Activated CD4-positive, alpha-beta memory T cell treated with anti-CD3 and anti-CD28 coated beads for 36 hours (primary cell): ENCODE measurements at regions of chr12 and their contacts with region 1.

Region 1: DNA sequence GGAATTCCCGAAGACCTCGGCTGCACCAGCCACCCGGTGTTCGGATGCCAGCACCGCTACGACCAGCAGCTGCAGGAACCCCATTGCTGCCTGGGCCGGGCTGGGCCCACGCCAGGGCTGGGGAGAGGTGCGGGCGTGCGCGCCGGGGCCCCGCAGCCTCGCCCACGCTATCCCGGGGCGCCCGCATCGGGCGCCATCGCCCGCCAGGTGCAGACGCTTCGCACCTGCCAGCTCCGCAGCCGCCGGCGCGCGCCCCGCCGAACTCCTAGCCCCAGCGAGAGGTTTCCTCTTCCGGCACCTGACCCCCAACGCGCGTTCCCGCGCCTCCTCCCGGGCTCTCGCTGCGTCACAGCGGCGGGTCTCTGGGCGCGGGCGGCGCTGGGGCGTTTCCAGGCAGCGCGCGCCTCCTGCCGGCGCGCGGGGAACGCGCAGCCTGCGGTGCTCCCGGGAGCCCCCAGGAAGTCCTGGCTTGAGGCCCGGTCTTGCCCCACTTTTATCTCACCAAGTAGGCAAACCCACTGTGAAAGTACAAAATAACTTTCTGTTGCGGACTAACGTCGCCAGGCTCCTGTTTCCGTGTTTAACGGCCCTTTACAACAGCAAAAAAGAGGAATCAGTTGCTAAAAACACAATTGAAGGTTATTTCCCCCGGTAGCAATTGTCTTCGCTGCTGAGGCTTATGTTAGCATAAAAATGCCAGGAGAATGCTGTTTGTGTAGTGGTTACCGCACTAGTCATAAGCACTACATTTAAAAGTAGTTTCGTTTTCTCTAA is at the start of gene TM7SF3:
- DNase-seq: peak; percentile 96
- H3K4me3 Mint-ChIP-seq: peak within 1 kb of the TSS; percentile 85
- H3K27ac Mint-ChIP-seq: peak within 1 kb of the TSS; percentile 89
- H3K4me1 Mint-ChIP-seq: peaks cover 46% of the 10 kb centered on the region
- H3K27me3 Mint-ChIP-seq: no peaks in the 10 kb centered on the region
- total RNA-seq, gene TM7SF3: 24.2 to 28.5 TPM

Region 2: DNA sequence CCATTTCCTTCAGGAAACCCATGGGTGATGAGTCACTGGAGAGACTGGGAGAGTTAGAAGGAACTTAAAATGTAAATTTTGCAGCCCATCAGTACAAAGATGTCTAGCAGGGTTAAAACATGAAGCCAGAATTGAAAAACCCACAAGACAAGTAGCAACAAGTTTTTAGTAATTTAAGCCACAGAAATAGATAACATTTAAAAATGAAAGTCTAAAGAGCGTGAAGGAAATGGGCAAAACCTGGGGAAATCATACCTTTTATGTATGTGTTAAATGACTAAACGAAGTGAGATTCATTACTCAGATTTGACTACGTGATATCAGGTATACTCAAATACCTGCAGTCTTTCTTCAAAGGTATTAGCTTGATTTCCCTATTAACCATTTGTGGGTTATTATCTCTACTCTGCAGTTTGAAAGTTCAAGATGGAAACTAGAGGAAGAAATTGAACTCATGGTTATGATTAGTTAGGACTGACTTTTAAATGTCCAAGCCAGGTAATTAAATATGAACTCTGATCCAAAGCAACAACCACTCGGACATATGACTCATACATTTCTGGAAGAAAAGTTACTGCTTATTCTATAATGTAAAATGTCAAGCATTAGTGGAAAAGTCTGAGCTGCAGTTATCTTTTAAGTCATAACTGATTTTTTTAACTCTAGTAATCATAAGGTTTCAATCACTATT is 265.4 kb before region 1 on chr12:
- CTCF ChIA-PET with region 1: interaction called, 4 read pairs
- POLR2A ChIA-PET with region 1: no interaction called
- intact Hi-C with region 1: loop called (anchors 1 kb)
- DNase-seq: no peak
- H3K4me3 Mint-ChIP-seq: peak overlapping the region; percentile 16
- H3K27ac Mint-ChIP-seq: peak overlapping the region; percentile 69
- H3K4me1 Mint-ChIP-seq: peaks cover 55% of the 10 kb centered on the region
- H3K27me3 Mint-ChIP-seq: no peaks in the 10 kb centered on the region

Region 3: GRCh38 chr12:26884765-26885576 is 129.3 kb before region 1 on chr12:
- CTCF ChIA-PET with region 1: interaction called, 16 read pairs
- POLR2A ChIA-PET with region 1: interaction called, 3 read pairs
- intact Hi-C with region 1: loop called (anchors 1 kb)
- DNase-seq: peak; percentile 87
- H3K4me3 Mint-ChIP-seq: peak overlapping the region; percentile 57
- H3K27ac Mint-ChIP-seq: no peak overlapping the region
- H3K4me1 Mint-ChIP-seq: peaks cover 7% of the 10 kb centered on the region
- H3K27me3 Mint-ChIP-seq: peaks cover 4% of the 10 kb centered on the region

Region 4: GRCh38 chr12:27024291-27024690 is 10.0 kb after region 1 on chr12:
- CTCF ChIA-PET with region 1: interaction called, 15 read pairs
- POLR2A ChIA-PET with region 1: interaction called, 9 read pairs
- intact Hi-C with region 1: loop called (anchors 1 kb)
- DNase-seq: no peak
- H3K4me3 Mint-ChIP-seq: no peak overlapping the region
- H3K27ac Mint-ChIP-seq: no peak overlapping the region
- H3K4me1 Mint-ChIP-seq: peaks cover 40% of the 10 kb centered on the region
- H3K27me3 Mint-ChIP-seq: no peaks in the 10 kb centered on the region

Region 5: DNA sequence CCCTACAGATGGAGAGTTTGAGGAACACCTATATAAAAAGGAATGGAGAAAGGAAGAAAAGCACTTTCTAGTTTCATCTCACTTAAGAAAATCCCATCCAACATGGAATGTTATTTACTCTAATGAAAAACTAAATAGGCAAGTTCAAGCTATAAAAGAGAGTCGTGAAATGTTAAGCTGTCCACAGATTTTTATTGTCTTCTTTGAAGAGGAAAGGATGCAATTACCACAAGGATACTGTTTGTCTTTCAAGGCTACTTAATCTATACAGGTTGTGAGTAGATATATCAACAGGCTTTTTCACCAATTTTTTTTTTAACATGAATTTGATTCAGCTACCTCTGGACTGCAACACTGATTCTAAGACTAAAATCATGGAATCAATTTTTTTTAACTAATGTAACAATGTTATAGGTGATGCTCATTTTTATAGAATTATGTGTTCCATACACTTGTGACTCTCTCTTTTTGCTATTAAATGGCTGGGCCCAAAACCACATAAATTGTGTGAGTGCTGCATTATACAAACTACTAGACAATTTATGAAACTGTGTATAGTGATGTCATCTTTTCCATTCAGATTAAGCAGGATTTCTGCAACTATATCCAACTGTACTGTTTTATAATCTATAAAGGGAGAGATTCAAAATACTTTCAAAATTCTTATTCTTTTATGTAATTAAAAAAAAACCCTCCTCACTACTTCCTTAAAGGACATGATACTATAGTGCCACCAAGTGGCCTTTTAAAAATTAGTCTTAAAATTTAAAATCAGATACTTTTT is 291.6 kb after region 1 on chr12:
- CTCF ChIA-PET with region 1: interaction called, 103 read pairs
- POLR2A ChIA-PET with region 1: interaction called, 3 read pairs
- intact Hi-C with region 1: loop called (anchors 1 kb)
- DNase-seq: no peak
- H3K4me3 Mint-ChIP-seq: no peak overlapping the region
- H3K27ac Mint-ChIP-seq: no peak overlapping the region
- H3K4me1 Mint-ChIP-seq: no peaks in the 10 kb centered on the region
- H3K27me3 Mint-ChIP-seq: no peaks in the 10 kb centered on the region

Region 6: DNA sequence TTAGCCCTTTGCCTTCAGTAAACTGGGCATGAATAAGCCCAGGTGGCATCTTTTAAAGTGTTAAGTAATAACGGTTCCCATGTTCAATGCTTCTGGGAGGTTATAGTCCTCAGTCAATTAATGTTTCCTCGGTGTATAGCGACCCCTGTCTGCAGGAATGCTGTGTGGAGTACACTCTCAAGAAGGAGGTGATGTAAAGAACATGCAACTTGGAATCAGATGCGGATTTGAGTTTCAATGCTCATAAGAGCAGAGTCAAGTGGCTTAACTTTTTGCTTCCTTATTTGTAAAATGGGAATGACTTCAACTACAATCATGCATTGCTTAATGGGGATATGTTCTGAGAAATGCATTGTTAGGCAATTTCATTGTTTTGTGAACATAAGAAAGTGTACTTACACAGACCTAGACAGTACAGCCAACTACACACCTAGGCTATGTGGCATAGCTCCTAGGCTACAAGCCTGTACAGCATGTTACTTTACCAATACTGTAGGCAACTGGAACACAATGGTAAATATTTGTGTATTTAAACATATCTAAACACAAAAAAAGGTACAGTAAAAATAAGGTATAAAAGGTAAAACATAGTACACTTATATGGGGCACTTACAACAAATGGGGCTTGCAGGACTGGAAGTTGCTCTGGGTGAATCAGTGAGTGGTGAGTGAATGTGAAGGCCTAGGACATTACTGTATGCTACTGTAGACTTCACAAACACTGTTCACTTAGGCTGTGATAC is 689.6 kb after region 1 on chr12:
- CTCF ChIA-PET with region 1: no interaction called
- POLR2A ChIA-PET with region 1: no interaction called
- intact Hi-C with region 1: loop called (anchors 1 kb)
- DNase-seq: peak; percentile 80
- H3K4me3 Mint-ChIP-seq: no peak overlapping the region
- H3K27ac Mint-ChIP-seq: no peak overlapping the region
- H3K4me1 Mint-ChIP-seq: peaks cover 2% of the 10 kb centered on the region
- H3K27me3 Mint-ChIP-seq: peaks cover 9% of the 10 kb centered on the region